Activated CD4-positive, alpha-beta memory T cell treated with anti-CD3 and anti-CD28 coated beads, Interleukin-2, amount 10 ng/mL, durations not matched to agents 7 days and 5 days (primary cell): ENCODE measurements at regions of chr17 and their contacts with region 1.

Region 1: GRCh38 chr17:7834962-7835813 is 1.2 kb downstream of the KDM6B start:
- DNase-seq: peak; percentile 89
- H3K4me3 Mint-ChIP-seq: peak overlapping the region; percentile 95
- H3K27ac Mint-ChIP-seq: peak overlapping the region; percentile 91
- H3K4me1 Mint-ChIP-seq: peaks cover 52% of the 10 kb centered on the region
- H3K27me3 Mint-ChIP-seq: peaks cover 20% of the 10 kb centered on the region

Region 2: DNA sequence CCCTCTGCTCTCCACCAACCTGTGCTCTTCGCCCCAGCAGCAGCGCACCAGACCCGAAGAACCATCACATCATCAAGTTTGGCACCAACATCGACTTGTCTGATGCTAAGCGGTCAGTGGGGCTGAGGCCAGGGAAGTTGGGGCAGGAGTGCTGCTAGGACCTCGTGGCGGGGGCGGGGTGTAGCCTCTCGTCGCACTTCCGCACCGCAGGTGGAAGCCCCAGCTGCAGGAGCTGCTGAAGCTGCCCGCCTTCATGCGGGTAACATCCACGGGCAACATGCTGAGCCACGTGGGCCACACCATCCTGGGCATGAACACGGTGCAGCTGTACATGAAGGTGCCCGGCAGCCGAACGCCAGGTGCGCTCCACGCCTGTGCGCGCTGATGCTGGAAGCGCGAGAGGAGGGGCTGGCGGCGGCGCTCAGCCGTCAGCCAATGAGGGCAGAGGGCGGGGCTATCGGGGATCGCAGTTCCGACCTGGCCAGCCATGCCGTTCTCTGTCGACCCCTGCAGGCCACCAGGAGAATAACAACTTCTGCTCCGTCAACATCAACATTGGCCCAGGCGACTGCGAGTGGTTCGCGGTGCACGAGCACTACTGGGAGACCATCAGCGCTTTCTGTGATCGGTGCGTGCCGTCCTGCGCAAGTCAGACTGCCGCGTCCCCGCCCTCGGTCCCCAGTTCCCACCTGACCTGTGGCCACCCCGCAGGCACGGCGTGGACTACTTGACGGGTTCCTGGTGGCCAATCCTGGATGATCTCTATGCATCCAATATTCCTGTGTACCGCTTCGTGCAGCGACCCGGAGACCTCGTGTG is 16.5 kb after region 1 on chr17:
- CTCF ChIA-PET with region 1: interaction called, 34 read pairs
- POLR2A ChIA-PET with region 1: interaction called, 30 read pairs
- DNase-seq: peak; percentile 95
- H3K4me3 Mint-ChIP-seq: peak overlapping the region; percentile 75
- H3K27ac Mint-ChIP-seq: peak overlapping the region; percentile 47
- H3K4me1 Mint-ChIP-seq: peaks cover 36% of the 10 kb centered on the region
- H3K27me3 Mint-ChIP-seq: no peaks in the 10 kb centered on the region